ENCODE measurements at regions of chr6 and their contacts with region 1.

Region 1: GRCh38 chr6:11298651-11299420 is 66.4 kb upstream of the NEDD9 start:
- DNase-seq: peak; percentile 98
- ATAC-seq: peak; percentile 98
- H3K4me3 ChIP-seq: peak overlapping the region in 2 of 3 experiments; percentile 15 to 61; a peak in 2 of 6 replicates
- H3K27ac ChIP-seq: peak overlapping the region; percentile 90
- H3K4me1 ChIP-seq: peaks cover 44% of the 10 kb centered on the region
- H3K27me3 ChIP-seq: no peaks in the 10 kb centered on the region
- CTCF ChIP-seq: peak; percentile 17; the same call in 1 of the 2 replicates
- EP300 ChIP-seq: peak; percentile 92 to 94
- POLR2A ChIP-seq: peak; percentile 9 to 49; a peak in 1 of 4 replicates
- RAD21 ChIP-seq: peak; percentile 42

Region 2: GRCh38 chr6:11207199-11207968 is 91.5 kb before region 1 on chr6:
- CTCF ChIA-PET with region 1: no interaction called
- POLR2A ChIA-PET with region 1: interaction called, 16 read pairs
- in situ Hi-C with region 1: no loop called
- intact Hi-C with region 1: no loop called
- DNase-seq: peak; percentile 98
- ATAC-seq: peak; percentile 53
- H3K4me3 ChIP-seq: no peak overlapping the region
- H3K27ac ChIP-seq: peak overlapping the region; percentile 68
- H3K4me1 ChIP-seq: peaks cover 100% of the 10 kb centered on the region
- H3K27me3 ChIP-seq: no peaks in the 10 kb centered on the region
- CTCF ChIP-seq: no peak
- EP300 ChIP-seq: peak; percentile 78 to 88
- POLR2A ChIP-seq: no peak; a peak in 1 of 4 replicates
- RAD21 ChIP-seq: no peak

Region 3: GRCh38 chr6:11218538-11219399 is 80.1 kb before region 1 on chr6:
- CTCF ChIA-PET with region 1: no interaction called
- POLR2A ChIA-PET with region 1: interaction called, 13 read pairs
- in situ Hi-C with region 1: no loop called
- intact Hi-C with region 1: no loop called
- DNase-seq: peak; percentile 99
- ATAC-seq: peak; percentile 91
- H3K4me3 ChIP-seq: peak overlapping the region; percentile 13 to 54 (median 21)
- H3K27ac ChIP-seq: peak overlapping the region; percentile 85
- H3K4me1 ChIP-seq: peaks cover 100% of the 10 kb centered on the region
- H3K27me3 ChIP-seq: no peaks in the 10 kb centered on the region
- CTCF ChIP-seq: peak; percentile 46
- EP300 ChIP-seq: peak; percentile 86 to 89; a peak in 3 of 4 replicates
- POLR2A ChIP-seq: peak in 1 of 2 experiments; percentile 77; a peak in 3 of 4 replicates
- RAD21 ChIP-seq: peak; percentile 76

Region 4: GRCh38 chr6:11277275-11278206 is 21.3 kb before region 1 on chr6:
- CTCF ChIA-PET with region 1: no interaction called
- POLR2A ChIA-PET with region 1: interaction called, 18 read pairs
- in situ Hi-C with region 1: no loop called
- intact Hi-C with region 1: no loop called
- DNase-seq: peak; percentile 90
- ATAC-seq: peak; percentile 54
- H3K4me3 ChIP-seq: peak overlapping the region in 1 of 3 experiments; percentile 18; a peak in 1 of 6 replicates
- H3K27ac ChIP-seq: peak overlapping the region; percentile 2
- H3K4me1 ChIP-seq: peaks cover 67% of the 10 kb centered on the region
- H3K27me3 ChIP-seq: no peaks in the 10 kb centered on the region
- CTCF ChIP-seq: no peak
- EP300 ChIP-seq: peak in 1 of 2 experiments; percentile 56; a peak in 1 of 4 replicates
- POLR2A ChIP-seq: no peak
- RAD21 ChIP-seq: no peak

Region 5: DNA sequence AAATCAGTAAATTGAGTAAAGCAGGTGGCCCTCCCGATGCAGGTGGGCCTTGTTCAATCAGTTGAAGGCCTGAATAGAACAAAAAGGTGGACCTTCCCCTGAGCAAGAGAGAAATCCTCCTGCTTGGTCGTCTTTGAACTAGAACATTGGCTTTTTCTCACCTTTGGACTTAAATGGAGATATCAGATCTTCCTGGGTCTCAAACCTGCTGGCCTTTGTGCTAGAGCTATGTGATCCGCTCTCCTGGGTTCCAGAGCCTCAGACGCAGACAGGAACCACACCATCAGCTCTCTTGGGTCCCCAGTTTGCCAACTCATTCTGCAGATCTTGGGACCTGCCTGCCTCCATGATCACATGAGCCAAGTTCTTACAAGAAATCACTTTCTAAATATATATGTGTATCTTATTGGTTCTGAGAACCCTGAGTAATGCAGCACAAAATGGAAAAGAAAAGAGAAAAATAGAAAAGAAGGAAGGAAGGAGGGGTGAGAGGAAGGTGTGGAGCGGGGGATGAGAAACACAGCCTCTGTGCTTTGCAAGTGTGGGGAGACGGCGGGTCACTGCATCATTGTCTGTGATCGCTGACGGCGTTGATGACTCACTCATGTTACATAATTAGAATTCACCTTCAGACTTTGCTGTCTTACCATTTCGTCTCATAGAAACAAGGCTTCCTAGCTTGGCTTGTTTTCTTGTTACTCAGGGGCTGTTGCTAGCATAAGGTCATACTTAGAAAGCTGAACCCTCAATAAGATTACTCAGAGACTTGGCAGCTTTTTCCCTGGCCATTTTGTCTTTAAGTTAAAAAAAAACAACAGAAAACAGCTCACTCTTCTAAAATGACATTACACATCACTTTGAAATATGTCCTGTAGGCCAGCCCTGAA is 19.3 kb after region 1 on chr6:
- CTCF ChIA-PET with region 1: no interaction called
- POLR2A ChIA-PET with region 1: interaction called, 13 read pairs
- in situ Hi-C with region 1: no loop called
- intact Hi-C with region 1: no loop called
- DNase-seq: peak; percentile 82
- ATAC-seq: peak; percentile 83
- H3K4me3 ChIP-seq: peak overlapping the region in 1 of 3 experiments; percentile 20; a peak in 1 of 6 replicates
- H3K27ac ChIP-seq: peak overlapping the region; percentile 56
- H3K4me1 ChIP-seq: peaks cover 45% of the 10 kb centered on the region
- H3K27me3 ChIP-seq: no peaks in the 10 kb centered on the region
- CTCF ChIP-seq: no peak
- EP300 ChIP-seq: peak in 1 of 2 experiments; percentile 78; a peak in 2 of 4 replicates
- POLR2A ChIP-seq: no peak
- RAD21 ChIP-seq: no peak

Region 6: GRCh38 chr6:11392778-11393507 is 94.1 kb after region 1 on chr6:
- CTCF ChIA-PET with region 1: no interaction called
- POLR2A ChIA-PET with region 1: interaction called, 11 read pairs
- in situ Hi-C with region 1: no loop called
- intact Hi-C with region 1: loop called (anchors 2 kb)
- DNase-seq: peak; percentile 100
- ATAC-seq: peak; percentile 85
- H3K4me3 ChIP-seq: peak overlapping the region in 1 of 3 experiments; percentile 39; a peak in 2 of 6 replicates
- H3K27ac ChIP-seq: peak overlapping the region; percentile 98
- H3K4me1 ChIP-seq: peaks cover 97% of the 10 kb centered on the region
- H3K27me3 ChIP-seq: no peaks in the 10 kb centered on the region
- CTCF ChIP-seq: peak; percentile 17; the same call in 1 of the 2 replicates
- EP300 ChIP-seq: peak; percentile 89 to 100
- POLR2A ChIP-seq: peak; percentile 63 to 66; a peak in 3 of 4 replicates
- RAD21 ChIP-seq: no peak

Region 7: DNA sequence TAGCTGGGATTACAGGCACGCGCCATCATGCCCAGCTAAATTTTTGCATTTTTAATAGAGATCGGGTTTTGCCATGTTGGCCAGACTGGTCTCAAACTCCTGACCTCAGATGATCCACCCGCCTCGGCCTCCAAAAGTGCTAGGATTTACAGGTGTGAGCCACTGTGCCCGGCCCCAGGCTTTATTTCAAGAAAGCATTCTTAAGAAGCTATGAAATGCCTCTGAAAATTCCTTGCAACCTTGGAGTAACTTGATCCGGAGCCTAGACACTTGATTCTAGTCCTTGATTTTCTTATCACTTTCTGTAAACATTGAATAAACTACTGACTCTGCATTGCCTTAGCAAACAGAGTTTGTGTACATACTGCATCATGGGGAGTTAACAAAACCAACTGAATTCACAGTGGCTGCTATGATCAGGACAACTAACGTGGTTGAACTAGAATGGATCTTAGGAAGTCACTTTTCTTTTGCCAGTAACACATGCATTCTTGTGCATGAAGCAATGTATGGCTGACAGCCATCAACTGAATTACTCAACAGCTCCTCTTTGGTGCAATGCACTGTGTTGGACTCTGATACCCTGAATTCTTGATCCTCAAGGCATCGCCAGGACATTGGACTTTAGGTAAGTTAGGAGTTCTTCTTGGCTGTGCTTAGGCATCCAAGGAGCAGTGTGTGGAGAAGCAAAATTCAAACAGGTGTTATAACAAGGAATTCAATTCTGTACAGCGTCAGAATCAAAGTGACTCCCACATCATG is 135.9 kb after region 1 on chr6:
- CTCF ChIA-PET with region 1: no interaction called
- POLR2A ChIA-PET with region 1: interaction called, 4 read pairs
- in situ Hi-C with region 1: no loop called
- intact Hi-C with region 1: loop called (anchors 5 kb)
- DNase-seq: peak; percentile 100
- ATAC-seq: peak; percentile 95
- H3K4me3 ChIP-seq: peak overlapping the region in 1 of 3 experiments; percentile 16; a peak in 1 of 6 replicates
- H3K27ac ChIP-seq: peak overlapping the region; percentile 69
- H3K4me1 ChIP-seq: peaks cover 78% of the 10 kb centered on the region
- H3K27me3 ChIP-seq: no peaks in the 10 kb centered on the region
- CTCF ChIP-seq: peak; percentile 33; the same call in 1 of the 2 replicates
- EP300 ChIP-seq: peak; percentile 91 to 95
- POLR2A ChIP-seq: no peak
- RAD21 ChIP-seq: no peak